ENCODE measurements at regions of chr3 and their contacts with region 1.

Region 1: GRCh38 chr3:49093853-49094767 is at the start of gene QRICH1:
- DNase-seq: peak; percentile 96
- ATAC-seq: peak; percentile 82
- H3K4me3 Mint-ChIP-seq: peak within 1 kb of the TSS; percentile 96
- H3K27ac Mint-ChIP-seq: peak within 1 kb of the TSS; percentile 97
- H3K4me1 Mint-ChIP-seq: peaks cover 19% of the 10 kb centered on the region
- H3K27me3 Mint-ChIP-seq: no peaks in the 10 kb centered on the region
- total RNA-seq, gene QRICH1: 141 to 153 TPM

Region 2: GRCh38 chr3:49007068-49007770 is 86.9 kb before region 1 on chr3 and contains the start of gene WDR6:
- POLR2A ChIA-PET with region 1: interaction called, 25 read pairs
- DNase-seq: peak; percentile 95
- ATAC-seq: peak; percentile 92
- H3K4me3 Mint-ChIP-seq: peak within 1 kb of the TSS; percentile 96
- H3K27ac Mint-ChIP-seq: peak within 1 kb of the TSS; percentile 99
- H3K4me1 Mint-ChIP-seq: peaks cover 18% of the 10 kb centered on the region
- H3K27me3 Mint-ChIP-seq: no peaks in the 10 kb centered on the region
- total RNA-seq, gene WDR6: 185 to 207 TPM

Region 3: DNA sequence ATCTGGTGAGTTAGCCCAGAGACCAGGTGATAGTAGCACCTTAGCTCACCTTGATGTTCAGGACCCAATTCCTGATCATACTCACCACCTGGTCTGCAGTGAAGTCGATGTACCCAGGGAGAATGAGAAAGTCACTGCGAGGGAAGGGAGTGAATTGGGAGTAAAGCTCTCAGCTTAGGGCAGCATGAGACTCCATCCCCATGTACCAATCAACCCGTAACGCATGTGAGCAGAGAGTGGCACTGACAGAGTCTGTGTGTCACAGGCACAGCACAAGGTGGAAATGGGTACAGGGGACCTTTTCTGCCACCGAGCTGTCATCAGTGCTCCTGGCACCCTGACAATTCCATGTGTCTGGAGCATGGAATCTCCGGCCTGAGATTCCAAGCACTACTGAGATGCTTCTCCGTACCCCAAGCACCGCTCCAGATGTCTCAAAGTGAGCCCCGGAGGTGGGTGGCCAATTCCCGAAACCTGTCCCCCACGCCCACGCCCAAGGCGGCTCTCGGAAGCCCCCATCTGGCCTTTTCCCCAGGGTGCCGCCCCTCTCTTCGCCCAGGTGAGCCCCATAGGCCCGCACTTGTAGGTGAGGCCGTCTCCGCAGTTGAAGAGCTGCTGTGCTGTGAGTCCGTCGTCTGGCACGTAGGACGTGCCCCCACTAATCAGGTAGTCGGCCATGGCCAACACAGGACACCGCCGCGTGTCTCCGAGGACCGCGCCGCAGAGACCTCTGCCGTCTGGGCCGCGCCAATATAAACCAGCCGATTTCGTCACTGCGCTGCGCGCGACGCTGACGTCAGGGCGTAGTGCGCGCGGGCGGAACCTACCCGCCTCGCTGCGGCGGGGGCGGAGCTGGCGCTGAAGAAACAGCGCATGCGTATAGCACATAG is 65.2 kb before region 1 on chr3 and contains the start of gene IMPDH2:
- POLR2A ChIA-PET with region 1: interaction called, 101 read pairs
- DNase-seq: peak; percentile 96
- ATAC-seq: peak; percentile 92
- H3K4me3 Mint-ChIP-seq: peak within 1 kb of the TSS; percentile 94
- H3K27ac Mint-ChIP-seq: peak within 1 kb of the TSS; percentile 85
- H3K4me1 Mint-ChIP-seq: peaks cover 37% of the 10 kb centered on the region
- H3K27me3 Mint-ChIP-seq: no peaks in the 10 kb centered on the region
- total RNA-seq, gene IMPDH2: 145 to 146 TPM

Region 4: DNA sequence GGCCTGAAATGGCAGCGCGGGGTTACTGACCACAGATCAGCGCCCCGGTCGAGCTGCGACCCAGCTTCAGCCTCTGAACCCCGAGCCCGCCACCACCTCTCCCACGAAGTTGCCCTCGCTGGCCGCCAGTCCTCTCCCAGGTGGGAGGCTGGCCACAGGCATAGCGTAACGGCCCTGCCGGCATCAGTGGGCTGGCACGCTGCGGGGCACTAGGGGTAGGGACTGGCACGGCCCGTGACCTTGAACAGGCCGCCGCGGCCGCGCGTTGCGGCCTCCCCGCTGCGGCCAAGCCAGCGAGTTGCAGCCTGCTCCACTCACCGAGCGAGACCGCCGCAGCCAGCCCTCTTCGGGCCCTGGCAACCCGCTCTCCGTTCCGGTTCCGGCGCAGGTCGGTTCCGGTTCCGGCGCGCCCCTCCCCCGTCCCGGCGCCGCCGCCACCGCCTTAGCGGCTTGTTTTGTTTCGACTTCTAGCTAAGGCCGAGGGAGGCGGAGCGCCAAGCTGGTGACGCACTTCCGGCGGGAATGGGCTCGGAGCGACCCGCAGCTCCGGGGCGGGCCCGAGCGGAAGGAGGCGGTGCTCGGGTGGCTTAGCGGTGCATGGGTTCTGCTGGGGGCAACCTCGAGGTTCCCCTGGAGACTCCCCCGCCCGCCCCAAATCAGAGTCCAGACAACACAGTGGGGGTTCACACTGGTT is 26.5 kb after region 1 on chr3 and contains the start of gene USP19:
- POLR2A ChIA-PET with region 1: interaction called, 55 read pairs
- DNase-seq: peak; percentile 95
- ATAC-seq: peak; percentile 93
- H3K4me3 Mint-ChIP-seq: peak within 1 kb of the TSS; percentile 92
- H3K27ac Mint-ChIP-seq: peak within 1 kb of the TSS; percentile 89
- H3K4me1 Mint-ChIP-seq: peaks cover 5% of the 10 kb centered on the region
- H3K27me3 Mint-ChIP-seq: no peaks in the 10 kb centered on the region
- total RNA-seq, gene USP19: 77.8 to 78.2 TPM

Region 5: DNA sequence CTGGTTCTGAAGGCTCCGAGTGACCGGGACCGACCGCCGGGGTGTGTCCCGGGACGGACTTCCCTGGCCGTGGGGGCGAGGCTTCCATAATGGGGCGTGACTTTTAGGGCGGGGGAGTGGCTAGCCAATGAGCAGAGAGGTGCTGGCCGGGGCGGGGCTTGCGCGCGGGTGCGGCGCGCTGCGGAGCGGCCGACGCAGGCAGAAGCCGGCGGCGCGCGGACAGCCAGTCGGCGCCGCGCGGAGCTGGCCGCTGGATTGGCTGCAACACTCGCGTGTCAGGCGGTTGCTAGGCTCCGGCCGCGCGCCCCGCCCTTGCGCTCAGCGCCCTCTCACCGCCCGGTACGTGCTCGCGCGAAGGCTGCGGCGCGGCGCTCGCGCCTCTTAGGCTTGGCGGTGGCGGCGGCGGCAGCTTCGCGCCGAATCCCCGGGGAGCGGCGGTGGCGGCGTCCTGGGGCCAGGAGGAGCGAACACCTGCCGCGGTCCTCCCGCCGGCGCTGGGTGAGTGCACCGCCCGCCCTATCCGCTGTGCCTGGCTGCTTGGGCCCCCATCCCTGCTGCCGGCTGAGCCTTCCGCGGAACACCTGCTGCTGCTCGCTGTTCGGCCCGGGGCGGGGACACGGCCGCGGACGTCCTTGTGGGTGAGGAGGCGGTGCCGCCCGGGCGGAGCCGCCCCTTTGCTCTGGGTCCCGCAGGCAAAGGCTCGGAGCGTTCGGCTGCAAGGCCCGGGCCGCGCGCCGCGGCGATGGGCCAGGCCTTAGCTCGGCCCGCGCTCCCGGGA is 376.0 kb after region 1 on chr3 and contains the start of gene DAG1:
- POLR2A ChIA-PET with region 1: interaction called, 13 read pairs
- DNase-seq: peak; percentile 97
- ATAC-seq: peak; percentile 89
- H3K4me3 Mint-ChIP-seq: peak within 1 kb of the TSS; percentile 88
- H3K27ac Mint-ChIP-seq: peak within 1 kb of the TSS; percentile 87
- H3K4me1 Mint-ChIP-seq: peaks cover 20% of the 10 kb centered on the region
- H3K27me3 Mint-ChIP-seq: no peaks in the 10 kb centered on the region
- total RNA-seq, gene DAG1: 14.1 to 17.5 TPM

Measured in activated naive CD8-positive, alpha-beta T cell treated with anti-CD3 and anti-CD28 coated beads, Interleukin-2, amount 10 ng/mL, durations not matched to agents 7 days and 5 days (primary cell).